A549 (cell line): ENCODE measurements at regions of chr2 and their contacts with region 1.

Region 1: GRCh38 chr2:7097348-7097895 is 180.2 kb downstream of the RNF144A start:
- DNase-seq: peak; percentile 64 to 72
- ATAC-seq: peak; percentile 87 to 97
- H3K4me3 ChIP-seq: peak overlapping the region; percentile 11; the same call in 1 of the 3 replicates
- H3K27ac ChIP-seq: peak overlapping the region in 1 of 2 experiments; percentile 15; a peak in 1 of 6 replicates
- H3K4me1 ChIP-seq: no peaks in the 10 kb centered on the region
- CTCF ChIP-seq: peak; percentile 97
- EP300 ChIP-seq: no peak
- POLR2A ChIP-seq: no peak
- RAD21 ChIP-seq: peak; percentile 97 to 98

Region 2: GRCh38 chr2:7111626-7112025 is 14.2 kb after region 1 on chr2:
- CTCF ChIA-PET with region 1: interaction called, 69 read pairs
- POLR2A ChIA-PET with region 1: no interaction called
- DNase-seq: peak in 1 of 2 experiments; percentile 9
- ATAC-seq: peak; percentile 55 to 60; a peak in 2 of 6 replicates
- H3K4me3 ChIP-seq: no peak overlapping the region
- H3K27ac ChIP-seq: no peak overlapping the region
- H3K4me1 ChIP-seq: no peaks in the 10 kb centered on the region
- CTCF ChIP-seq: no peak
- EP300 ChIP-seq: no peak
- POLR2A ChIP-seq: no peak
- RAD21 ChIP-seq: no peak

Region 3: GRCh38 chr2:7118606-7119503 is 21.4 kb after region 1 on chr2:
- CTCF ChIA-PET with region 1: interaction called, 36 read pairs
- POLR2A ChIA-PET with region 1: no interaction called
- DNase-seq: peak; percentile 25 to 36
- ATAC-seq: peak; percentile 75 to 90; a peak in 5 of 6 replicates
- H3K4me3 ChIP-seq: no peak overlapping the region
- H3K27ac ChIP-seq: no peak overlapping the region
- H3K4me1 ChIP-seq: no peaks in the 10 kb centered on the region
- CTCF ChIP-seq: peak; percentile 74
- EP300 ChIP-seq: no peak
- POLR2A ChIP-seq: no peak
- RAD21 ChIP-seq: peak; percentile 85 to 87